ENCODE measurements at regions of chr1 and their contacts with region 1.

Region 1: GRCh38 chr1:91165033-91165654 is 143.3 kb upstream of the ZNF644 start:
- DNase-seq: peak; percentile 87
- ATAC-seq: peak; percentile 93
- H3K4me3 Mint-ChIP-seq: no peak overlapping the region
- H3K27ac Mint-ChIP-seq: no peak overlapping the region
- H3K4me1 Mint-ChIP-seq: no peaks in the 10 kb centered on the region
- H3K27me3 Mint-ChIP-seq: peaks cover 2% of the 10 kb centered on the region

Region 2: DNA sequence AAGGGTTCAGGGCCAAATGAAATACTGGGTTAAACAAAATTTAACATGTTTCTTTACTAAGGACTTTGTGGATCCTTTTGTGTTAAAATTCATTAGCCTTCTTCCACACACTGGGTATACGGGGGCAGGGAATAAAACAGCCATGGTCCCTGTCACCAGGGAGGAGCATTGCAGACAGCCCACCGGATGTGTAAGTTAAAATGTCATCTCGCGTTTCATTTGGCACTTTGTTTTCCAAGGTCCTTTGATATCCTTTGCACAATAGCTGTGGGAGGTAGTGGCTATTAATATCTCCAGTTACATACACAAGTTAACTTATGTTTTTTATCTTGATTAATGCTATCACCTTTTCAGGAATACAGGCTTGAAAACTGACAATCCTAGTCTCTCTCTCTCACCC is 620.8 kb before region 1 on chr1:
- CTCF ChIA-PET with region 1: no interaction called
- POLR2A ChIA-PET with region 1: no interaction called
- intact Hi-C with region 1: no loop called
- DNase-seq: no peak
- ATAC-seq: no peak
- H3K4me3 Mint-ChIP-seq: no peak overlapping the region
- H3K27ac Mint-ChIP-seq: no peak overlapping the region
- H3K4me1 Mint-ChIP-seq: no peaks in the 10 kb centered on the region
- H3K27me3 Mint-ChIP-seq: peaks cover 11% of the 10 kb centered on the region

Region 3: GRCh38 chr1:90579212-90579802 is 585.8 kb before region 1 on chr1:
- CTCF ChIA-PET with region 1: interaction called, 6 read pairs
- POLR2A ChIA-PET with region 1: no interaction called
- intact Hi-C with region 1: loop called (anchors 1 kb)
- DNase-seq: no peak
- ATAC-seq: peak; percentile 51
- H3K4me3 Mint-ChIP-seq: no peak overlapping the region
- H3K27ac Mint-ChIP-seq: no peak overlapping the region
- H3K4me1 Mint-ChIP-seq: no peaks in the 10 kb centered on the region
- H3K27me3 Mint-ChIP-seq: peaks cover 5% of the 10 kb centered on the region

Region 4: DNA sequence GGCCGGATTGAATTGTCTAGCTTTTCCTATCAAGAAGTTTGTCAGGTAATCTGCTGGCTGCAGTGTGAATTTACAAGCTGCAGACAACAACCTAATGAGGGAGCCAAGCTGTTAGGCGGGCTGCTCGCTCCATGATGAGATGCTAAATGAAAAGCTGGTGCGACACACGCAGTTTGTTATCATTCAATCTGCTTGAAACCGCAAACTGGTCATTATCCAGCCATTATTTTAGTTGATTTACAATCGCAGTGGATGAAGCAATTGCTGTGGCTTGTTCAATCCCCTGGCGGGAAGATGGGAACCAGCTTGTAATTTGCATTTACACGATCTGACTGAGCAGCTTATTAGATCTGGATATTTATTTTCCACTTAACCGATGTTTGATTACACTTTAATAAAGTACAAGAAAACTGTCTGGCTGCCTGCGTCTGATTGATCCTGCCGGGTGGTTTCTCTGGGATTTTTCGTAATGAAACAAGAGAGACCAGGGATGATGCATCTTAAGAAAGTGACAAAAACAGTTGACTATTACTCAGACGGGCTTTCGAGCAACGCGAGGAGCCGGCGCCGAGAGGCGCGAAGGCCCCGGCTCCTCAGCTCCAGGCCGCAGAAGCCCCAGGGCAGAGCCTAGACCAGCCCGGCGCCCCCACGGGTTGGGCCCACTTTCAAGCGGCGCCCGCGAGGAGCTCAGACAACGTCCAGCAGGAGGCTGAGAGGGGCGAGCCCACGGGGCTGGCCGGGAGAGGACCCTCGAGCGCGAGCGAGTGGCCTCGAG is 330.1 kb before region 1 on chr1:
- CTCF ChIA-PET with region 1: interaction called, 5 read pairs
- POLR2A ChIA-PET with region 1: no interaction called
- intact Hi-C with region 1: loop called in 1 of 2 experiments (anchors 10 kb)
- DNase-seq: peak; percentile 60
- ATAC-seq: peak; percentile 87
- H3K4me3 Mint-ChIP-seq: no peak overlapping the region
- H3K27ac Mint-ChIP-seq: no peak overlapping the region
- H3K4me1 Mint-ChIP-seq: peaks cover 23% of the 10 kb centered on the region
- H3K27me3 Mint-ChIP-seq: peaks cover 75% of the 10 kb centered on the region

Region 5: DNA sequence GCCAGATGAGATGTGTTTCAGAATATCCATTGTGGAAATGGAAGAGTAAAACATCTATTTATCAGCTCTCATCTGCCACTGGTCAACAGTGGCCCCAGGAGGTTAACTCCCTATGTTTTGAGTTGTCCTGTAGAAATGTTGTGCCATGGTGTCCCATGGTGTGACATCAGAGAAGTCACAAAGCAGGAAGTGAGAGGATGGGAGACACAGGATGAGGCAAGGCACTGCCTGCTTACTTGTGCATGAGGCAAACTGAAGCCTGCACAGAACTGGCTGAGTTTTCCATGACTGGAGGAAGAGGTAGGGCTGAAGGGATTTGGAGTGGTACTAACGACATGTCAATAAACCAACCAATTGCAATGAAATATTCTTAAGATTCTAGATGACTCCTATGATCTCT is 11.8 kb before region 1 on chr1:
- CTCF ChIA-PET with region 1: interaction called, 24 read pairs
- POLR2A ChIA-PET with region 1: no interaction called
- intact Hi-C with region 1: no loop called
- DNase-seq: no peak
- ATAC-seq: no peak
- H3K4me3 Mint-ChIP-seq: no peak overlapping the region
- H3K27ac Mint-ChIP-seq: no peak overlapping the region
- H3K4me1 Mint-ChIP-seq: no peaks in the 10 kb centered on the region
- H3K27me3 Mint-ChIP-seq: peaks cover 12% of the 10 kb centered on the region

Region 6: GRCh38 chr1:91282695-91283420 is 117.7 kb after region 1 on chr1:
- CTCF ChIA-PET with region 1: interaction called, 9 read pairs
- POLR2A ChIA-PET with region 1: no interaction called
- intact Hi-C with region 1: loop called (anchors 1 kb)
- DNase-seq: peak; percentile 64
- ATAC-seq: no peak
- H3K4me3 Mint-ChIP-seq: no peak overlapping the region
- H3K27ac Mint-ChIP-seq: no peak overlapping the region
- H3K4me1 Mint-ChIP-seq: no peaks in the 10 kb centered on the region
- H3K27me3 Mint-ChIP-seq: peaks cover 5% of the 10 kb centered on the region

Region 7: DNA sequence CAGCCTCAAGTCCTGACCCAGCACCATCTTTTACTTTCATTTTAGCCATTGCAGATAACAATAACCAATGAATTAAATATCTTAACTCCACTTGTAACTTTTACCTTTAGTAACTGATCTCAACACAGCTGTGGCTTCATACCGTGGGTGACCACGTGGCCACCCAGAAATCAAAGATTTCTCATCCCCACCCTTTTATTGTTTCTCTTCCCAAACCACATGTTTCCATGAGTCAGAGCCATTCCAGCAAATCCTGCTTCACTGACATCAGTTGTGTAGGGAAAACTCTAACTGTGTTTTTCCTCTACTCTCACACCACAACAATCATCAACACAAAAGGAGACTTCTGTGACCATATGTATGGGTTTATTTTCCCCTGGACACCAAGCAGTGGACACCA is 759.0 kb after region 1 on chr1:
- CTCF ChIA-PET with region 1: interaction called, 3 read pairs
- POLR2A ChIA-PET with region 1: no interaction called
- intact Hi-C with region 1: loop called in 1 of 2 experiments (anchors 2 kb)
- DNase-seq: no peak
- ATAC-seq: no peak
- H3K4me3 Mint-ChIP-seq: no peak overlapping the region
- H3K27ac Mint-ChIP-seq: no peak overlapping the region
- H3K4me1 Mint-ChIP-seq: peaks cover 9% of the 10 kb centered on the region
- H3K27me3 Mint-ChIP-seq: no peaks in the 10 kb centered on the region

Measured in activated CD4-positive, alpha-beta T cell treated with anti-CD3 and anti-CD28 coated beads for 36 hours (primary cell).